Head of caudate nucleus (tissue), 42 donors: ENCODE measurements at regions of chr6 and their contacts with region 1.

Region 1: GRCh38 chr6:31197559-31198305 is 27.2 kb upstream of the POU5F1 start:
- DNase-seq: peak; percentile 74 to 93 (median 86)

Region 2: GRCh38 chr6:31068669-31069340 is 128.9 kb before region 1 on chr6:
- intact Hi-C with region 1: no loop called
- DNase-seq: peak; percentile 64 to 96 (median 87)

Region 3: DNA sequence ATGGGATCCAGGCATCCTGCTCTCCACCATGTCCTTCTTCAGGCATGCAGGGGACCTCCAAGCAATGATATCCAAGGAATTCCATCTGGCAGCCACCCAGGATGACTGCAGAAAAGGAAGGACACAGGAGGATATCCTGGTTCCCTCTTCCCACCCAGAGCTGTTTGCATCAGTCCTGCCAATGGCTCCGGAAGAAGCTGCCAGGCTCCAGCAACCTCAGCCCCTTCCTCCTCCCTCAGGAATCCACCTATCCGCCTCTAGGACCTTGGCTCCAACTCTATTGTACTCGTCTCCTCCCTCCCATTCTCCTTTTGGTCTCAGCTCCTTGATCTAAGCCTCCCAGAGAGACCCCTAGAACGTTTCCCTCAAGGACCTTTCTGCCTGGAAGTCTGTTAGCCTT is 58.1 kb before region 1 on chr6:
- intact Hi-C with region 1: loop called (anchors 5 kb)
- DNase-seq: no peak

Region 4: DNA sequence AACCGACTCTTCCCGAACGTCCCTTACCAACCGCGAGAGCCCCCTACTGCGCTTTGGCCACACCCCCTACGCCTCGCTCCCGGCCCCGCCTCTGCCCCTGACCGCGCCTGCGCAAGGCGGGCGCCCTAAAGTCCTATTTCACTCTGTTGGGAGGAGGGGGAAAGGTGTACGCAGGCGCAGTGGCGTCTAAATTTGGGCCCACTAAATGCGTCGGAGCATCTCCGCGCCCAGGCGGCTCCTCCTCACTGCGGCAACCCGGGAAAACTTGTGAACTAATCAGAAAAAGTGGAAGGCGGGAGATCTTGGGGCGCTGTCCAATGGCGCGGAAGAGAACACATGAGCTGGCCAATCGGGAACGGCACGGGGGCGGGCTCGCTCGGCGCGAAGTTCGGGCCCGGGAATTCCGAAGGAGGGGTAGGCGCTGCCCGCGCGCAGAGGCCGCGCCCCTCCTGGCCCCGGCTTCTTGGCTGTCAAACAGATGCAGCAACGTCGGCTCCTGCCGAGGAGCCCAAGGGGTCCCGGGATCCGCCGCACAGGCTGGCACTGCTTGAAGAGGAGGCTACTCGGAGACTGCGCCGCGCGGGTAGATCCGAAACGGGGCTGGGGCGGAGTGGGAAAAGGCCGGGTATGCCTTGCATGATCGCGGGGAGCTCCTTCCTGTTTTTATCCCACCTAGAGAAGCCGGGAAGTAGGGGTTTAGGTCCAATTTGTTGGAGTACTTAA is 39.4 kb before region 1 on chr6 and contains the start of gene TCF19:
- intact Hi-C with region 1: loop called (anchors 5 kb)
- DNase-seq: peak; percentile 93 to 99 (median 97)

Region 5: GRCh38 chr6:31225735-31226134 is 28.0 kb after region 1 on chr6:
- intact Hi-C with region 1: no loop called
- DNase-seq: no peak

Region 6: GRCh38 chr6:31271641-31272357 is 74.1 kb after region 1 on chr6 and contains the start of gene HLA-C:
- intact Hi-C with region 1: loop called (anchors 2 kb)
- DNase-seq: peak; percentile 71 to 97 (median 90)

Region 7: GRCh38 chr6:31366693-31367470 is 169.2 kb after region 1 on chr6:
- intact Hi-C with region 1: loop called (anchors 2 kb)
- DNase-seq: peak; percentile 57 to 95 (median 90)